Activated CD4-positive, alpha-beta memory T cell treated with anti-CD3 and anti-CD28 coated beads, Interleukin-2, amount 10 ng/mL, durations not matched to agents 7 days and 5 days (primary cell): ENCODE measurements at regions of chr7 and their contacts with region 1.

Region 1: DNA sequence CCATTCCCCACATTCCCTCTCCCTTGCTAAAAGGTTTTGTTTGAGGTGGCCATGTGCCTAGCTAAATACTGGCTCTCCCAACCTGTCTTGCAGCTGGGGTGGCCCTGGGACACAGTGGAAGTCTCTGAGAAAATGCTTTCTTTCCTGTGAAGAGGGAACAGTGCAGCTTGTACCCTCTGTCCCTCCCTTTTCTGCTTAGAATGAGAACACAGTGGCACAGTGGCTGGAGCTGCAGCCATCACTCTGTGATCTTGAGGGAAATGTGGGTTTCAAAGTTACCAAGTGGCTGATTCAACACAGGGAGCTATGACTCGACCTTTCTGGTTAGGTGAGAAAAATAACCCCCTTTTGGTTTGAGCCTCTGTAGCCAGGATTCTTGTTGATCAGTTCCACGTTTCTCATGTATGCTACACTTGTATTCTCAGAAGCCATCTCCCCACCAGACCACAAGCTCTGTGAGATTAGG is 62.7 kb upstream of the CARD11 start:
- DNase-seq: peak; percentile 71
- H3K4me3 Mint-ChIP-seq: peak overlapping the region; percentile 22
- H3K27ac Mint-ChIP-seq: peak overlapping the region; percentile 99
- H3K4me1 Mint-ChIP-seq: peaks cover 93% of the 10 kb centered on the region
- H3K27me3 Mint-ChIP-seq: no peaks in the 10 kb centered on the region

Region 2: GRCh38 chr7:3042861-3043489 is 63.4 kb before region 1 on chr7:
- CTCF ChIA-PET with region 1: no interaction called
- POLR2A ChIA-PET with region 1: interaction called, 11 read pairs
- DNase-seq: peak; percentile 82
- H3K4me3 Mint-ChIP-seq: peak overlapping the region; percentile 98
- H3K27ac Mint-ChIP-seq: peak overlapping the region; percentile 94
- H3K4me1 Mint-ChIP-seq: peaks cover 57% of the 10 kb centered on the region
- H3K27me3 Mint-ChIP-seq: no peaks in the 10 kb centered on the region

Region 3: DNA sequence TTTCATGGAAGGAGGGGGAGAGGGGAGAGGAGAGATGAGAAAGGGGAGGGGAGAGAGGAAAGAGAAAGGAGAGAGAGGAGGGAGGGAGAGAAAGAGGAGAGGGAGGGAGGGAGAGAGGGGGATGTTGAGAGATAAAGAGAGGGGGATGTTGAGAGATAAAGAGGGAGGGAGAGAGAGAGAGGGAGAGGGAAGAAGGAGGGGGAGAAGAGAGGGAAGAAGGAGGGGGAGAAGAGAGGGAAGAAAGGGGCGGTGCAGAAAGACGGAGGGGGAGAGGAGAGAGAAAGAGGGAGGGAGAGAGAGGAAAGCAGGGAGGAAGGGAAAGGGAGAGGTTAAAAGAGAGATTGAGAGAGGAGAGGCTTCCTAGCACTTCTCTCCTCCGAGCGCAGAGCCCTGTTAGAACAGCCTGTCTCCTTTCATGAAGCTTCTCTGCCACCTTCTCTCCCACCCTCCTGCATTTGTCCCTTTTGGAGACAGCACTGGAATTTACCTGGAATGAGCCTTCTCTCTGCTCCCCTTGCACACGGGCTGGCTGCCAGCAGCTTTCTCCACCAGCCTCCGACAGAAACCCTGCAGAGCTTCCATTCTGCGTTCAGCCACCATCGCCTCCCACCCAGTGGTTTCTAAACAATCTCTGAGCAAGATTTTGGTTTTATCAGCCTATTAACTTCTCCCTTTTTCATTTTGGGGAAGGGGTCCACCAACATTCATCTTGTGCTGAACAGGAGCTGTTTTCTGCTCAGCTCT is 11.3 kb after region 1 on chr7:
- CTCF ChIA-PET with region 1: interaction called, 8 read pairs
- POLR2A ChIA-PET with region 1: interaction called, 65 read pairs
- DNase-seq: peak; percentile 57
- H3K4me3 Mint-ChIP-seq: peak overlapping the region; percentile 90
- H3K27ac Mint-ChIP-seq: peak overlapping the region; percentile 94
- H3K4me1 Mint-ChIP-seq: peaks cover 87% of the 10 kb centered on the region
- H3K27me3 Mint-ChIP-seq: peaks cover 3% of the 10 kb centered on the region